ENCODE measurements at regions of chr19 and their contacts with region 1.

Region 1: DNA sequence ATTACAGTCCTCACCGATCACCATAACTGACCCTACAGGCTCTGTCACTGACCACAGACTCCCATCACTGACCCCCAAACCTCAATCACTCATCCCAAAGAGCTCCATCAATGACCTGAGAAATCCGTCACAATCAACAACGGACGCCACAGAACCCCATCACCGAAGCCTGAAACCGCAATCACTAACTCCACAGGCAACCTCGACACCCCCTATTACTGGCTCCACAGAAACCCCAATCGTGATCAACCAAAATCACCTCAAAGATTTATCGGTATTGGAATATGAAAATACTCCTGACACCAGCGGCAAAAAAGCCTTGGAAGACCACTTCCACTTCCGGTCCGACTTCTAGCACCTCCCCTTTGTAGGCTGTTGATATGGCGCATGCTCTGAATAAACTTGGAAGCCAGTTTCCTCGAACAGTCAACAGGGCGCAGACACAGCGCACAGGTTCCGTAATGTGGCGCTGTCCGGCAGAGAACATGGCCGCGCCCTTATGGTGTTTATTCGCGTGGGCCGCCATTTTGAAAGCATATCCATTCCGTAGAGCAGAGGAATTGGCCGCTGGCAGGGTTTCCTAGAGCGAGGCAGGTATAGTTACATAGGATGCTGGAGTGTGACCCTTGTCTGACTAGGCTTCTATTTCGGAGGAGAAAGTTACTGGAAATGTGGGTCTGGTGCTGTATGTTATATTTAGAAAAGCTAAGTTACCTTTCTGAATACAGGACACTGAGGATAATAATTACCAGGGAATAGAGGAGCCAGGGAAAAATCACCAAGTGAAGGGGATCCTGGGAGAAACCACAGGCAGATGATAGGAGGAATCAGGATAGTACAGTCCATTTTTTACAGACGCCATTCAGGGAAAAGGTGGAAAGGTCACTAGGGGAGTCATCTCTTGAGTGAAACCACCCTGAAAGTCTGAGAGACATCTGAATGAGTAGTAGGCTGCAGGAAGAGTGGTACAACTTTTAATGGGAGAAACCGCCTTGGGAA is at the start of gene ZNF585A:
- DNase-seq: peak; percentile 94 to 98 (median 97)
- H3K4me3 ChIP-seq: peak within 1 kb of the TSS; percentile 70 to 100 (median 98)
- H3K4me3 Mint-ChIP-seq: no peak within 1 kb of the TSS
- H3K27ac ChIP-seq: peak within 1 kb of the TSS; percentile 46 to 87
- H3K27ac Mint-ChIP-seq: no peak within 1 kb of the TSS
- H3K4me1 ChIP-seq: peaks cover 5 to 17% of the 10 kb centered on the region in 2 donors
- H3K4me1 Mint-ChIP-seq: no peaks in the 10 kb centered on the region
- H3K27me3 ChIP-seq: no peaks in the 10 kb centered on the region
- H3K27me3 Mint-ChIP-seq: peaks cover 0 to 1% (median 0%) of the 10 kb centered on the region in 3 donors
- CTCF ChIP-seq: no peak
- polyA plus RNA-seq, gene ZNF585A: 6.4 to 25.5 (median 23.2) TPM

Region 2: DNA sequence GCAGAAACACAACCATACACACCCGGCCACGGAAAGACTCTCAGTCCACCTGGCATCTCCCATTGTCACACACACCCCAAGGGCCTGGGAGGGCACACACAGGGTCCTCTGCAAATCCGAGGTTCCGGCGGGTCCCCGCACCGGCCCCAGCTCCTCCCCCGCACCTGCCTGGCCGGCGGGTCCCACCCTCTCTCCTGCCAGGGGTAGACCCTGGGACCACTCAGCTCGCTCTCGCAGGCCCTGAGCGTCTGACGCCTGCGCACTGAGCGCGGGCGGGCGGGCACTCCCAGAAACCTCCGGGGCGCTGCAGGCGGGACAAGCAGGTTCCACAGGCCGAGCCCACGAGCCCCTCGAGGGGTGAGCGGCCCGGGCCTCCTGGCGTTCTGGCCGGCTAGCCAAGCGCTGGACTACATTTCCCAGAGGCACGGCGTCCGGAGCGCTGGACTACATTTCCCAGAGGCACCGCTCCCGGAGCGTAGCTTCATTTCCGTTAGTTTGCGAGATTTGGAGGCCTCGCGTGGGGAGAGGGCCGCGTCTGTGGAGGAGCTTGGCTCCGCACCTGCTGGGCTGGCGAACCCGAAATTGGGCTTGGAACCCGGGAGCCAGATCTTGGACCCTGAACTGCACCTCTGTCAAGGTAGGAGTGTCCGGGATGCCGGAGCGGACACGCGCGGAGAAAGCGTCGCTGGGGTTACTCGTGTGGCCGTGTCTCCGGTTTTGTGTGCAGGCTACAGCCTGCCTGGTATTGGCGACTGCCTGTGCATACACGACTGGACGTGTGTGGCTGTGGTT is 94.5 kb before region 1 on chr19 and contains the start of gene ZNF420:
- intact Hi-C with region 1: loop called (anchors 5 to 10 kb)
- DNase-seq: peak; percentile 82 to 90 (median 85)
- H3K4me3 ChIP-seq: peak within 1 kb of the TSS; percentile 57 to 94 (median 89)
- H3K4me3 Mint-ChIP-seq: peak within 1 kb of the TSS; percentile 99 to 100
- H3K27ac ChIP-seq: peak within 1 kb of the TSS; percentile 40 to 75
- H3K27ac Mint-ChIP-seq: peak within 1 kb of the TSS; percentile 62 to 96 (median 85)
- H3K4me1 ChIP-seq: peaks cover 16 to 19% of the 10 kb centered on the region in 2 donors
- H3K4me1 Mint-ChIP-seq: peaks cover 20% of the 10 kb centered on the region
- H3K27me3 ChIP-seq: no peaks in the 10 kb centered on the region
- H3K27me3 Mint-ChIP-seq: peaks cover 0 to 5% (median 0%) of the 10 kb centered on the region in 3 donors
- CTCF ChIP-seq: no peak
- polyA plus RNA-seq, gene ZNF420: 1.4 to 2.5 (median 1.8) TPM

Region 3: GRCh38 chr19:37334179-37335071 is 161.8 kb after region 1 on chr19:
- intact Hi-C with region 1: loop called in 1 of 2 experiments (anchors 10 kb)
- DNase-seq: peak; percentile 79 to 86 (median 79)
- H3K4me3 ChIP-seq: peak overlapping the region; percentile 53 to 92 (median 64)
- H3K4me3 Mint-ChIP-seq: peak overlapping the region; percentile 85 to 90
- H3K27ac ChIP-seq: peak overlapping the region; percentile 29 to 89
- H3K27ac Mint-ChIP-seq: peak overlapping the region; percentile 77 to 91 (median 89)
- H3K4me1 ChIP-seq: peaks cover 8 to 17% of the 10 kb centered on the region in 2 donors
- H3K4me1 Mint-ChIP-seq: peaks cover 16% of the 10 kb centered on the region
- H3K27me3 ChIP-seq: no peaks in the 10 kb centered on the region
- H3K27me3 Mint-ChIP-seq: peaks cover 0 to 3% (median 0%) of the 10 kb centered on the region in 3 donors
- CTCF ChIP-seq: no peak

Region 4: DNA sequence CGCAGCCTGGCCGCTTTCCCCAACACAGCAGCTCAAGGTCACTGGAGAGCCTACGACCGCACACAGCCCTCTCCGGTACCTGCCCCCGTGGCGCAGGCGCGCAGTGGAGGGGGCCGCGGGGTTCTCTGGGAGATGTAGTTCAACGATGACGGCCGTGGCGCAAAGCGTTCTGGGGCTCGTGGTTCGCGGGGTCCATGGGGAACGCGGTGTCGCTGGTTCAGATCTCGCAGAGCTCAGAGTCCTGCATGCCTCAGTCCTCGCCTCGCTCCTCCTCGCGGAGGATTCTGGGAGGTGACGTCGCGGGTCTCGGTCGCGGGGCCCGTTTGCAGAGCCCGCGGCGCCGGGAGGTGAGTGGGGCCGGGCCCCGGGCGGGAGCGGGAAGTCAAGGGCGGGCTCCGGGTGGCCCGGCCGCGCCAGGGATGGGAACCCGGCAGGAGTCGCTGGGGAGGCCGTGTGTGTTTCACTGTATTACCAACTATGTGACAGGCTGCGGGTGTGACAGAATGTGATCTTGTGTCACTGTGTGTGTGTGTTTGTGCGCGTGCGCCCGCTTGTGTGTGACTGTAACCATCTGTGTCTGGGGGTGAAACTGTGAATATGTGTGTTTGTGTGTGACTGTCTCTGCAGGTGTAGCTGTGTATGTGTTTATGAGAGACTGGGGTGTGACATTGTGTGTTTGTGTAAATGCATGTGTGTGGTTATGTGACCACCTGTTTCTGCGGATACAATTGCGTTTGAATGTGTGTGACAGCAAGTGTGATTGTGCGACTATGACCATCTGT is 198.4 kb after region 1 on chr19 and contains the start of gene ZNF527:
- intact Hi-C with region 1: loop called in 1 of 2 experiments (anchors 2 kb)
- DNase-seq: peak; percentile 89 to 93 (median 91)
- H3K4me3 ChIP-seq: peak within 1 kb of the TSS; percentile 62 to 79 (median 72)
- H3K4me3 Mint-ChIP-seq: peak within 1 kb of the TSS; percentile 99 to 100
- H3K27ac ChIP-seq: peak within 1 kb of the TSS; percentile 59 to 73
- H3K27ac Mint-ChIP-seq: peak within 1 kb of the TSS; percentile 95 to 98 (median 96)
- H3K4me1 ChIP-seq: peaks cover 8% of the 10 kb centered on the region in 2 donors
- H3K4me1 Mint-ChIP-seq: peaks cover 9% of the 10 kb centered on the region
- H3K27me3 ChIP-seq: no peaks in the 10 kb centered on the region
- H3K27me3 Mint-ChIP-seq: peaks cover 0 to 2% (median 0%) of the 10 kb centered on the region in 3 donors
- CTCF ChIP-seq: no peak
- polyA plus RNA-seq, gene ZNF527: 0.83 to 1.6 (median 1.3) TPM